Activated T-helper 1 cell treated with anti-CD3 and anti-CD28 coated beads, Interleukin-12 subunit alpha, Interleukin-12 subunit beta, Interleukin-2, Interleukin-4 antibody, amounts not matched to agents 30 ng/mL and 10 ng/mL and 1 ng/mL, durations not matched to agents 14 hours and 24 hours and 36 hours (primary cell): ENCODE measurements at regions of chr1 and their contacts with region 1.

Region 1: GRCh38 chr1:65393347-65393746 is 27.1 kb upstream of the LEPR start:
- DNase-seq: peak; percentile 30
- H3K4me3 Mint-ChIP-seq: peak overlapping the region; percentile 35
- H3K27ac Mint-ChIP-seq: peak overlapping the region; percentile 70
- H3K4me1 Mint-ChIP-seq: peaks cover 96% of the 10 kb centered on the region
- H3K27me3 Mint-ChIP-seq: no peaks in the 10 kb centered on the region

Region 2: DNA sequence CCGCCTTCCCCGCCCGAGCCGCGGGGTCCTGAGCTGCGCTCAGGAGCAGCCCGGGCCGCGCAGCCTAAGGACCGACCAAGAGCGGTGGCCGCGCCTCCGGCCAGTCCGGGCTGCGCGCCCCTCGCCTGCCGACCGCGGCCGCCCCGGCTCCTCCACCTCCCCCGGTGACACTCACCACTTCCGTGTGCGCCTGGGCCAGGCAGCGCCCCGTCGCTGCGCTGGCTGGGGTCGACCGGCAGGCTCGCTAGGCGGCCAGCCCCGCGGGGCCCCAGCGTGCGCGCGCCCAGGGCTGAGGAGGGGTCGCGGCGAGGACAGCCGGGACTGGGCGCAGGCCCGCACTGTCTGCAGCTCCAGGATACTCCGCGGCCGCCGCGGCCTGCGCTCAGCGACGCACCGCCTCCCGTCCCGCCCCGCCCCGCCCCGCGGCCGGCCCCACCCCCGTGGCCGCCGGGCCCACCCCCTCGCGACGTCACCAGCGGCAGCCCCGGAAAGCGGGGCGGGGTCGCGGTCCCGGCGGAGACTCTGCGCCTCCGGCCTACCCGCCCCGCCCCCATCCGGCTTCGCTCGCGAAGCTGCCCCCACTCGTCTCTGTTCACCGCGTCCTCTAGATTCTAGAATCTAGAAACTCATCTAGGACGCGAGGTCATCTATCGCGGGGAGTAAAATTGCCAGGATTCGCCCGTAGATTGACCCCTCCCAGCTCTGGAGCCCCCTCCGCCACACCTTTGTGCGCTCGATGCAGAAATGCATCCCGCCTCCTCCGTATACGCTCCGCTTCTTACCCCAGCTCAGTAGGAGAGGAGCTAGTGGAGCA is 427.0 kb before region 1 on chr1 and contains the start of gene JAK1:
- intact Hi-C with region 1: loop called (anchors 5 kb)
- DNase-seq: peak; percentile 81
- H3K4me3 Mint-ChIP-seq: peak within 1 kb of the TSS; percentile 93
- H3K27ac Mint-ChIP-seq: peak within 1 kb of the TSS; percentile 88
- H3K4me1 Mint-ChIP-seq: peaks cover 55% of the 10 kb centered on the region
- H3K27me3 Mint-ChIP-seq: peaks cover 2% of the 10 kb centered on the region
- total RNA-seq, gene JAK1: 102 TPM in 2 replicates

Region 3: GRCh38 chr1:65209005-65209885 is 184.1 kb before region 1 on chr1:
- intact Hi-C with region 1: loop called (anchors 1 kb)
- DNase-seq: no peak
- H3K4me3 Mint-ChIP-seq: no peak overlapping the region
- H3K27ac Mint-ChIP-seq: peak overlapping the region; percentile 20
- H3K4me1 Mint-ChIP-seq: peaks cover 76% of the 10 kb centered on the region
- H3K27me3 Mint-ChIP-seq: no peaks in the 10 kb centered on the region

Region 4: DNA sequence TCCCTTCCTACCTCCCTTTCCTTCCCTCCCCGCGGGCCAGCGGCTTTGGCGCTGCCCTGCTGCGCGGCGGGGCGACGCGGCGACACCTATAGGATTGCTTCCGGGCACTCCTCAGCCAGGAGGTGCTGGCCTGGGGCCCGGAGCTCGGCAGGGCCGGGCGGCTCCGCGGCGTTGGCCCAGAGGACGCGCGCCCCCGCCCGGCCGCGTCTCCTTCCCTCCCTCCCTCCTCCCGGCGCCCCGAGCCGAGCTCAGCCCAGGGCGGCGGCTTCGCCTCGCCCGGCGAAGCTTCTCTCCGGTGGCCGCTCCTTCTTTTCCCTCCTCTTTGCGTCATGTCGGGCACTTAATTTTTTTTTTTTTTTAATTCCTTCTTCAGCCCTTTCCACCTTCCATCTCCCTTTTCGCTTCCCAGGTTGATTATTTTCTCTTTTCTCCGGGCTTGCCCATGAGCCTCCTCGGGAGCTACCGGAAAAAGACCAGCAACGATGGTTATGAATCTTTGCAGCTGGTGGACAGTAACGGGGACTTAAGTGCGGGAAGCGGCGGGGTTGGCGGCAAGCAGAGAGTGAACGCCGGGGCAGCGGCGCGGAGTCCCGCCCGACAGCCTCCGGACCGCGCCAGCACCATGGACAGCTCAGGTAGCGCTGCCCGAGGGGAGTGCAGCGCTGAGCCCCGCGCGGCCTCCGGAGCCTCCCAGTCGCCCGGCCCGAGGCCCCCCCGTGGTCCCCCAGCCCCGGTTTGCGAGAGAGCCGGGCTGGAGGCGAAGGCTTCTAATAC is 83.9 kb before region 1 on chr1 and contains the start of gene DNAJC6:
- intact Hi-C with region 1: loop called (anchors 5 kb)
- DNase-seq: peak; percentile 53
- H3K4me3 Mint-ChIP-seq: peak within 1 kb of the TSS; percentile 78
- H3K27ac Mint-ChIP-seq: peak within 1 kb of the TSS; percentile 23
- H3K4me1 Mint-ChIP-seq: peaks cover 13% of the 10 kb centered on the region
- H3K27me3 Mint-ChIP-seq: peaks cover 49% of the 10 kb centered on the region
- total RNA-seq, gene DNAJC6: 4.4 and 6.2 TPM in 2 replicates

Region 5: GRCh38 chr1:65412984-65413375 is 19.6 kb after region 1 on chr1:
- intact Hi-C with region 1: no loop called
- DNase-seq: no peak
- H3K4me3 Mint-ChIP-seq: no peak overlapping the region
- H3K27ac Mint-ChIP-seq: no peak overlapping the region
- H3K4me1 Mint-ChIP-seq: peaks cover 17% of the 10 kb centered on the region
- H3K27me3 Mint-ChIP-seq: peaks cover under 1% of the 10 kb centered on the region

Region 6: GRCh38 chr1:65459397-65459768 is 66.0 kb after region 1 on chr1:
- intact Hi-C with region 1: loop called (anchors 2 kb)
- DNase-seq: peak; percentile 2
- H3K4me3 Mint-ChIP-seq: no peak overlapping the region
- H3K27ac Mint-ChIP-seq: no peak overlapping the region
- H3K4me1 Mint-ChIP-seq: peaks cover 26% of the 10 kb centered on the region
- H3K27me3 Mint-ChIP-seq: no peaks in the 10 kb centered on the region

Region 7: DNA sequence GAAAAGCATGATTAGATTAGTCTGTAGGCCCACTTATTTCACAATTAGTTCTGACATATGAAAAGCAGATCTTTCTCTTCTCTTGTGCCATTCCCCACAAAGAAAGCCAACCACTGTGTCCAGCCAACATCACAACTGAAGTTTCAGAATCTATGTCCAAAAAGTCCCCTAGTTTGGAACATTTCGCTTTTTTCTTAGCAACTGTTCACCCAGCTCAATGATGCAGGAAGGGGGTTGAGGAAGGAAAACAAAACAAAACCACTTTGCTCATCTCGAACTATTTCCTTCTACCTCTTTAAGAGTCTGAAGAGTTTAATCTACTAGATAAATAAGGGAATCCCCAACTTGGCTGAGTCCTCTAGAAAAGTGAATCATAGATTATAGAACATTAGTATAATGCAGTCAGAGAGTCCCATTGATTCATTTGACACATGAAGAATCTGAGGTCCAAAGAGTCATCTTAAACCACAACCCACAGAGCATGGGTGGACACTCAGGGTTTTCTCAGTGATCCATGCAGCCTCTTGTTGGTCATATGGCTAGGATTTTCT is 981.3 kb after region 1 on chr1:
- intact Hi-C with region 1: loop called (anchors 10 kb)
- DNase-seq: peak; percentile 19
- H3K4me3 Mint-ChIP-seq: peak overlapping the region; percentile 77
- H3K27ac Mint-ChIP-seq: peak overlapping the region; percentile 96
- H3K4me1 Mint-ChIP-seq: peaks cover 69% of the 10 kb centered on the region
- H3K27me3 Mint-ChIP-seq: no peaks in the 10 kb centered on the region

Region 8: DNA sequence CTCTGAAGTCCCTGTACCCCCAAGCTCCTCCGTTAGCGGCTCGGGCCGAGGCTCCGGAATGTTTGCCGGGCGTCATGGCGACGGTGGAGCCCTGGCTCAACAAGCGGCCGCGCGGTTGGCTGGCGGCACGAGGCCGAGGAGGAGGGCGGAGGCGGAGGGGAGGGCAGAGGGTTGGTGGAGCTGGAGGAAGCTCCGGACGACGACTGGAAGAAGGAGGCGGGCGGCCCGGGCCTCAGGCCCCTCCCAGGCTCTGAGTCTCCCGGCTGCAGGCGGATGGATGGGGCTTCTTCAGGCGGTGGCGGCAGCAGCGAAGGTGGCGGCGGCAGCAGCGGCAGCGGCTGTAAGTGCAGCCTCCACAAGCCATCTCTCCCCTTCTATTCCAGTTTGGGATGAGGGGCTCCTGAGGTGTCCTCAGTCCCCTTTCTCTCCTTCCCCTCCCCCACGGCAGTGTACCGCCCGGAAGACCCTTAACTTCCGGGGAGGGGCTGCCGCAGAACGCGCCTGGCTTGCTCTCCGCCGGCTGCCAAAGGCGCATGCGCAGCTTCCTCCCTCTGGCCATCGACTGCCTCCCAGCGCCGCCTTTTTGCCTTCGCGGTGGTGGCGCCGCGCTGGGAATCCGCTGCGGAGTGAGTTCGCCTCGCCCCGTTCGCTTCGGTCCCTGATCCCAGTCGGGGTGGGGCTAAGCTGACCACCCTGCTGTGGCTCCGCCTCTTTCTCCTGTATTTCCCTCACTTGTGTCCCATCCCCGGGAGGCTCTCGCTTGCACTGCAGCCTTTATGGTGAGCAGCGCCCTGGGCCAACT is 1531.6 kb after region 1 on chr1 and contains the starts of genes DNAI4 and MIER1:
- intact Hi-C with region 1: loop called (anchors 10 kb)
- DNase-seq: peak; percentile 98
- H3K4me3 Mint-ChIP-seq: peak within 1 kb of the TSS; percentile 93
- H3K27ac Mint-ChIP-seq: peak within 1 kb of the TSS; percentile 97
- H3K4me1 Mint-ChIP-seq: peaks cover 66% of the 10 kb centered on the region
- H3K27me3 Mint-ChIP-seq: no peaks in the 10 kb centered on the region
- total RNA-seq, gene DNAI4: 1.2 and 3.2 TPM in 2 replicates
- total RNA-seq, gene MIER1: 53.2 and 57.4 TPM in 2 replicates